GM13976 (cell line): ENCODE measurements at regions of chr12 and their contacts with region 1.

Region 1: DNA sequence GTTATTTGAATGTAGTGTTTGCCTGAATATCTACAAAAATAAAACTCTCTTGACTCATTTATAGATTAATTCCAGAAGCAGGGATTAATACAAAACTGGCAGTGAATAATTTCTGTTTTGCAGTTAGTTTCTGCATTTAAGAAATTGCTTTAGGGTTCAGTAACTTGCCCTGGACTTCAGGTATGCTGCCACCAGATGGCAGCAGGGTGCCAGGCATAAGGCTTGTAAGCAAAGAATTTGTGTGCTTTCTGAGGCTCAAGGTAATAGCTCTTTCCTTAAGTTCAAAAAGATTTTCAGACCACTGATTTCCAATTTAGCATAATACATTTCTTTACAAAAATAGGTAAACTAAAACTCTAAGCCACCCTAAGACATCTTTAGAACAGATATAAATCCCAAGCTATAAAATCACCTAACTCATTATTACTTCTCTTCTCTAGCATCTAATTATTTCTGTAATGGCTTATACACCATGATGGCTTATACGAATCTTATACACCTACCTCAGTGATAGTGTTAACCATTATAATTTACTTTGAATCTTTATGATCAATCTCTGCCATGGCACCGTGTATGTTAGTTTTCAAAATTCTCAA is 398.3 kb downstream of the APAF1 start:
- DNase-seq: peak; percentile 46
- CTCF ChIP-seq: peak; percentile 83

Region 2: DNA sequence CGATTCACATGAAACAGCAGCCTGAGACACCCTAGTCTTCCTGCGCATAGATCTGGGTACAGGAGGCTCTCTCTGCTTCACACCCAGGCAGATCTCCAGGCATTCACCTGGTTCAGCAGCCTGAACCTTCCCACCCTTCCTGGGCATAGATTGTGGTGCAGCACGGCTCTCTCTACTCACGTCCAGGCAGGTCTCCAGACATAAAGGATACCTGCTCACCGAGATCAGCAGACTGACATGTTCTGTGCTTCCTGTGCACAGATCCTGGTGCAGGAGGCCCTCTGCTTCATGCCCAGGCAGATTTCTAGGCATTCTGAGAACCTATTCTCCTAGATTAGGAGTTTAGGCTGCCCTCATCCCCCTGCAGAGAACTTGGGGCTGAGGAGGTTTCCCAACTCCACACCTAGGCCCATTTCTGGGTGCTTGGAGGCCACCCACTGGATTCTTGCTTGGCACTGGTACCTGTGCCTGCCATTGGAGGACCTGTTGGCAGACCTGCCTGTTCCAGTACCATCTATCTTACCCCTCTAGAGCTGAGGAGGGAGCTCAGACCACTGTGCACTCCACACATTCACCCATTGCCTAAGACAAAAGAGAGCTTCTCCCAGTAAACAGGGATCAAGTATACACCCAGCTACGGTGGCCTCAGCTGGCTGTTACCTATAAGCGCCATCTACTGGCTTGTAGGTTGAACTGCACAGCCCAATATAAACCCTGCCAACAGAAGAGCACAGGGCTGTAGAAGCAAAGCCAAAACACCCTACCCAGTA is 576.2 kb after region 1 on chr12:
- in situ Hi-C with region 1: loop called (anchors 25 kb)
- DNase-seq: no peak
- CTCF ChIP-seq: peak; percentile 86